ENCODE measurements at regions of chr14 and their contacts with region 1.

Region 1: GRCh38 chr14:75514673-75515628 is 7.3 kb upstream of the BATF start:
- DNase-seq: peak; percentile 61
- ATAC-seq: peak; percentile 56
- H3K4me3 Mint-ChIP-seq: peak overlapping the region; percentile 87
- H3K27ac Mint-ChIP-seq: peak overlapping the region; percentile 99
- H3K4me1 Mint-ChIP-seq: peaks cover 69% of the 10 kb centered on the region
- H3K27me3 Mint-ChIP-seq: no peaks in the 10 kb centered on the region
- CTCF ChIP-seq: no peak

Region 2: GRCh38 chr14:75258615-75259466 is 256.1 kb before region 1 on chr14:
- CTCF ChIA-PET with region 1: no interaction called
- POLR2A ChIA-PET with region 1: interaction called, 6 read pairs
- intact Hi-C with region 1: loop called (anchors 2 kb)
- DNase-seq: peak; percentile 99
- ATAC-seq: peak; percentile 86
- H3K4me3 Mint-ChIP-seq: peak overlapping the region; percentile 95
- H3K27ac Mint-ChIP-seq: peak overlapping the region; percentile 100
- H3K4me1 Mint-ChIP-seq: peaks cover 24% of the 10 kb centered on the region
- H3K27me3 Mint-ChIP-seq: peaks cover 4% of the 10 kb centered on the region
- CTCF ChIP-seq: no peak

Region 3: GRCh38 chr14:75283162-75283881 is 231.6 kb before region 1 on chr14:
- CTCF ChIA-PET with region 1: no interaction called
- POLR2A ChIA-PET with region 1: no interaction called
- intact Hi-C with region 1: no loop called
- DNase-seq: no peak
- ATAC-seq: no peak
- H3K4me3 Mint-ChIP-seq: no peak overlapping the region
- H3K27ac Mint-ChIP-seq: no peak overlapping the region
- H3K4me1 Mint-ChIP-seq: peaks cover 29% of the 10 kb centered on the region
- H3K27me3 Mint-ChIP-seq: peaks cover 21% of the 10 kb centered on the region
- CTCF ChIP-seq: no peak

Region 4: GRCh38 chr14:75399821-75400678 is 114.9 kb before region 1 on chr14:
- CTCF ChIA-PET with region 1: no interaction called
- POLR2A ChIA-PET with region 1: no interaction called
- intact Hi-C with region 1: no loop called
- DNase-seq: no peak
- ATAC-seq: peak; percentile 18
- H3K4me3 Mint-ChIP-seq: no peak overlapping the region
- H3K27ac Mint-ChIP-seq: no peak overlapping the region
- H3K4me1 Mint-ChIP-seq: peaks cover 2% of the 10 kb centered on the region
- H3K27me3 Mint-ChIP-seq: peaks cover 3% of the 10 kb centered on the region
- CTCF ChIP-seq: no peak

Region 5: DNA sequence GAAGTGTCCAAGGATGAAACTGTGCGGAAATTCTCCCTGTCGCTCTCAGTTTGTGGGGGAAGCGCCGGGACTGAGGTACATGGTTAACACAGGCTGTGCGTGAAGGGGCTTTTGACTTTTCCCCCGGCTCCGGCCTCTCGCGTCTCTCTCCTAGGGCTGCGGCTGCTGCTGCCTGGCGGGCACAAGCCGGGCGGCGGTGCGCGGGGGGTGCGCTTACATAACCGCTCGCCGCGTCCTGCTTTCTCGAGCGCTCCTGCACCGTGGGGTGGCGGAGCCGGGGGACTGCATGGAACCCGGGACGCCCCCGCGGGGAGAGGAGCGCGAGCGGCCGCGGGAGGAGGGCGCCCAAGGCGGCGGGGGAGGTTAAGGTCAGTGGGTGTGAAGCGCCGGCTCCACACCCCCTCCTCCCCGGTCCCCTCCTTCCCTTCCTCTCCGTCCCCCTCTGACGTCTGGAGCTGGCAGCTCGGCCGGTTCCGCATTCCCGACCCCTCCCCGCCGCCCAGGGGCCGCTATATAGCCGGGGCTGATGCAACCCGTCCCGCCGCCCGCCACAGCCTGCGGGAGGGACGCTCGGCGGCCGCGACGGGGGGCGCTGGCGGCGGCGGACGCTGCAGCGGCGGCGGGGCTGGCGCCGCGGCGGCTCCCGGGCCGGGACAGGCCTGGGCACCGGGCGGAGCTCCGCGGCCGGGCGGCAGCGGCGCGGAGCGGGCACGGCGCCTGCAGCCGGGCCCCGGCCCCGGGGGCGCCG is 87.3 kb before region 1 on chr14 and contains the start of gene JDP2:
- CTCF ChIA-PET with region 1: interaction called, 4 read pairs
- POLR2A ChIA-PET with region 1: interaction called, 5 read pairs
- intact Hi-C with region 1: loop called (anchors 2 kb)
- DNase-seq: peak; percentile 57
- ATAC-seq: peak; percentile 53
- H3K4me3 Mint-ChIP-seq: peak within 1 kb of the TSS; percentile 88
- H3K27ac Mint-ChIP-seq: peak within 1 kb of the TSS; percentile 96
- H3K4me1 Mint-ChIP-seq: peaks cover 37% of the 10 kb centered on the region
- H3K27me3 Mint-ChIP-seq: no peaks in the 10 kb centered on the region
- CTCF ChIP-seq: no peak
- total RNA-seq, gene JDP2: 21.2 and 21.8 TPM in 2 replicates

Region 6: DNA sequence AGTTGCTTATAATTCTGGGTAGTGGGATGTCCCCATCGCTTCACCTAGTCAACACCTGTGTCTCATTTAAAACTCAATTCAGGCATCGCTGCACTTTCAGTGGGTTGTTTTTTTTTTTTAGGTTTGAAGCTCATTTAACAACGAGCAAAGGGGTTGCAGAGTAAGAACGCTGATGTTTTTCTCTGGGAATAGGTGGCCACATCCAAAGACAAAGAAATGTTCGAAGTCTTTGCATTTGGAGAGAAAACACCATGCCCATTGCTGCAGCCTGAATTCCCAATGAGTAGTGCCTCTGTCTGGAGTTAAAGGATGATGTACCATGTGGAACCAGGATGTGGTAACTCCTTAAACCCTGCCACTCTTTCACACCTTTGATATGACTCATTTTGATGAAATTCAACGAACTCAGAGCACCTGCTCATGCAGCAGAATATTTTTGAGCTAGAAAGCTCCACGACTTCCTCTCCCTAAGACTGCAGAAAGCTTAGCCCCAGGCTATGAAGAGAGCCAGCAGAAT is 27.7 kb before region 1 on chr14:
- CTCF ChIA-PET with region 1: interaction called, 37 read pairs
- POLR2A ChIA-PET with region 1: interaction called, 132 read pairs
- intact Hi-C with region 1: loop called (anchors 1 kb)
- DNase-seq: no peak
- ATAC-seq: peak; percentile 66
- H3K4me3 Mint-ChIP-seq: peak overlapping the region; percentile 9
- H3K27ac Mint-ChIP-seq: peak overlapping the region; percentile 42
- H3K4me1 Mint-ChIP-seq: peaks cover 22% of the 10 kb centered on the region
- H3K27me3 Mint-ChIP-seq: no peaks in the 10 kb centered on the region
- CTCF ChIP-seq: no peak

Region 7: DNA sequence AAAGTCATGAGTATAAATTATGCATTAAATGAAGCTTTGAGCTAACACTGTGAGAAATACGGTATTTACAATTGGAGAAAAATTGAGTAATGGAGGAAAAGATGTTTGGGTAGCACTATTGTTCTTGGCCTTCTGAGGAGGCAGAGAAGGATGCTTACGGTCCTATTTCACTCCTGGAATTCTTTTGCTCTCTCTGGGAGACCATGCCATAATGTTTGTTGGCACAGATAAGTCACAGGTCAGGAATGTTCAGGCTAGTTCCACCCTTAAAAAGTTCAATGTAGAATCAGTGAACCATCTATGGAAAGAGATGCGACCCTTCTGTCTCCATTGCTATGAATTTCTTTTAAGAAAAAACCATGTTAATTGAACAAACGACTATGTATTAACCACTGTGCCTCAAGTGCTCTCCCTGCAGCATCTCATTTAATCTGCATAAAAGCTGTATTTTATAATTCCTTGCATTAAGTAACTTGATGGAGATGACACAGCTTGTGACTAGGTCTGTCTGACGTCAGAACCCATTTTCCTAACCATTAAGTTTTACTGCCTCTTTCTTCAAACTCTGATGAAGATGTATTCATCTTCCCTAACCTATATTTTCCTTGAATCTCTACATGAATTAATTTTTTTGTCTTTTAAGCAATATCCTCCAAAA is 16.8 kb after region 1 on chr14:
- CTCF ChIA-PET with region 1: interaction called, 4 read pairs
- POLR2A ChIA-PET with region 1: interaction called, 356 read pairs
- intact Hi-C with region 1: no loop called
- DNase-seq: no peak
- ATAC-seq: no peak
- H3K4me3 Mint-ChIP-seq: no peak overlapping the region
- H3K27ac Mint-ChIP-seq: peak overlapping the region; percentile 9
- H3K4me1 Mint-ChIP-seq: peaks cover 59% of the 10 kb centered on the region
- H3K27me3 Mint-ChIP-seq: no peaks in the 10 kb centered on the region
- CTCF ChIP-seq: no peak

Region 8: DNA sequence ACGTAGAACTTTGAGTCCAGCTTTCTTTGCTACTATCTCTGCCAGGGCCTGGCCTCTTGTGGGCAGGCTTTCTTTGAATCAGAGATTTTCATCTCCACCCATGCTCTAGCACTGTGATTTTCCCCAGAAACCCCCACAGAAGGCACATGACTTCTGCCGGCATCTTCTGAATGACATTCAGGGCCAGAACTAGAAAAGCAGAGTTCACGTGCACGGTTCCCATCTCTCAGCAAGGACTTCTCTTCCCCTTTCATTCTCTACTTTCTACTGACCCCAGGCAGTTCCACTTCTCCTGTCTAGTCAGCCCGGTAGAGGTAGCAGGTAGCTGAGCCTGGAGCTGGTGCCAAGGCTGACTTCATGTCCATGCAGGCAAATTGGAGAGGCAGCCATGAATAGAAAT is 34.2 kb after region 1 on chr14:
- CTCF ChIA-PET with region 1: interaction called, 7 read pairs
- POLR2A ChIA-PET with region 1: interaction called, 356 read pairs
- intact Hi-C with region 1: loop called (anchors 1 kb)
- DNase-seq: no peak
- ATAC-seq: peak; percentile 80
- H3K4me3 Mint-ChIP-seq: peak overlapping the region; percentile 21
- H3K27ac Mint-ChIP-seq: peak overlapping the region; percentile 85
- H3K4me1 Mint-ChIP-seq: peaks cover 69% of the 10 kb centered on the region
- H3K27me3 Mint-ChIP-seq: no peaks in the 10 kb centered on the region
- CTCF ChIP-seq: no peak

Region 9: GRCh38 chr14:75577729-75578101 is 62.8 kb after region 1 on chr14:
- CTCF ChIA-PET with region 1: interaction called, 16 read pairs
- POLR2A ChIA-PET with region 1: interaction called, 14 read pairs
- intact Hi-C with region 1: loop called (anchors 5 kb)
- DNase-seq: peak; percentile 60
- ATAC-seq: peak; percentile 85
- H3K4me3 Mint-ChIP-seq: peak overlapping the region; percentile 89
- H3K27ac Mint-ChIP-seq: peak overlapping the region; percentile 72
- H3K4me1 Mint-ChIP-seq: peaks cover 29% of the 10 kb centered on the region
- H3K27me3 Mint-ChIP-seq: peaks cover 3% of the 10 kb centered on the region
- CTCF ChIP-seq: peak; percentile 36

Measured in activated B cell treated with CpG ODN at 0.5 μM for 24 hours (primary cell).